ENCODE measurements at regions of chr16 and their contacts with region 1.

Region 1: GRCh38 chr16:87062569-87063442 is 254.4 kb downstream of the C16orf95 start:
- DNase-seq: peak; percentile 86 to 92
- ATAC-seq: peak; percentile 91
- H3K4me3 ChIP-seq: no peak overlapping the region
- H3K27ac ChIP-seq: peak overlapping the region in 1 of 2 donors; percentile 45
- H3K4me1 ChIP-seq: no peaks in the 10 kb centered on the region
- H3K27me3 ChIP-seq: no peaks in the 10 kb centered on the region

Region 2: DNA sequence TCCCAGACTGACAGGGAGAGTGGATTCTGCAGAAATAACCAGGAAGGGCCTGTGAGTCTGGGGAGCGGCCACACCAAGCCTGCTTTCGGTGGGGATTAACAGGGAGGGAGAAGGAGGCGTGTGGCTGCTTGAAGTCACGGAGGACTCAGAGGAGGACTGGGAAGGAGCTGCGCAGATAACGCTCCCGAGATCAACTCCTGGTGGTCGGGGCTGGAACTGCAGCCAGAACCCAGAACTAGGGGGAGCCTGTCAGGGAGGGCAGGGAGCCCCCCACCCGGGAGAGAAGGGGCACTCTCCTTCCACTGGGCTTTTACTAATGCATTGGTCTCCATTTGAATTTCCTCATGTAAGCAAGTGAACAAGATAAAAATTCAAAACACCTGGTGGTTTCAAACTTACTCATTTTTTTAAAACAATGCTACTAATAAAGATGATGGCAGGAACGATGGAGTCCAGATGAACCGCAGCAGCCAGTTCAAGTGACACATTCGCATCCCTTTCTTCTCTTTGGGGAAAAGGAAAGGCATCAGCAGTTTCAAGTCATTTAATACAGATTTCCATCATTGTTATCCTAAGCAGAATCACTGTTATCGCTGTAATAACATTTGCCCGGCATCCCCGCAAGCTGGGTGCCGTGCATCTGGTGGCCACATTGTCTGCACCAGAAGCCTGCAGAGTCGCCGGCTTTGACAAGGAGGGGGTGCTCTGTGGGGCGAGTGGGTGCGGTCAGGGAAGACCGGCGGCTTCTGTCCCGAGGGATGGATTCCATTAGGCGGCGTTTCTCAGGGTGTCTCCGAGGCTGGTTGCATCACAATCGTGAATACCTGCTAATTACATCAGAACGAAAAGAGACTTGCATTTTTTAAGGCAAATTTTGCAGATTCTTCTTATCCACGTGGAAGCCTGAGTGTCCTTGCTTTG is 301.4 kb before region 1 on chr16:
- intact Hi-C with region 1: loop called (anchors 5 kb)
- DNase-seq: peak; percentile 78 to 93
- ATAC-seq: peak; percentile 88
- H3K4me3 ChIP-seq: peak overlapping the region in 1 of 2 donors; percentile 8
- H3K27ac ChIP-seq: no peak overlapping the region
- H3K4me1 ChIP-seq: no peaks in the 10 kb centered on the region
- H3K27me3 ChIP-seq: no peaks in the 10 kb centered on the region

Region 3: GRCh38 chr16:86901491-86902260 is 161.1 kb before region 1 on chr16:
- intact Hi-C with region 1: no loop called
- DNase-seq: peak in 1 of 2 donors; percentile 17
- ATAC-seq: no peak
- H3K4me3 ChIP-seq: no peak overlapping the region
- H3K27ac ChIP-seq: no peak overlapping the region
- H3K4me1 ChIP-seq: no peaks in the 10 kb centered on the region
- H3K27me3 ChIP-seq: no peaks in the 10 kb centered on the region

Region 4: GRCh38 chr16:86931399-86931941 is 131.3 kb before region 1 on chr16:
- intact Hi-C with region 1: loop called in 1 of 2 experiments (anchors 5 kb)
- DNase-seq: peak; percentile 85 to 93
- ATAC-seq: peak; percentile 49
- H3K4me3 ChIP-seq: no peak overlapping the region
- H3K27ac ChIP-seq: peak overlapping the region in 1 of 2 donors; percentile 7
- H3K4me1 ChIP-seq: no peaks in the 10 kb centered on the region
- H3K27me3 ChIP-seq: no peaks in the 10 kb centered on the region

Region 5: GRCh38 chr16:87033541-87034300 is 29.1 kb before region 1 on chr16:
- intact Hi-C with region 1: no loop called
- DNase-seq: peak in 1 of 2 donors; percentile 55
- ATAC-seq: no peak
- H3K4me3 ChIP-seq: no peak overlapping the region
- H3K27ac ChIP-seq: peak overlapping the region; percentile 65 to 91
- H3K4me1 ChIP-seq: peaks cover 0 to 3% of the 10 kb centered on the region in 2 donors
- H3K27me3 ChIP-seq: no peaks in the 10 kb centered on the region